ENCODE measurements at regions of chr5 and their contacts with region 1.

Region 1: GRCh38 chr5:58498340-58498942 is 7.2 kb downstream of the GAPT start:
- DNase-seq: peak; percentile 48
- H3K4me3 ChIP-seq: no peak overlapping the region
- H3K27ac ChIP-seq: no peak overlapping the region
- H3K4me1 ChIP-seq: no peaks in the 10 kb centered on the region
- H3K27me3 ChIP-seq: no peaks in the 10 kb centered on the region
- CTCF ChIP-seq: peak; percentile 81

Region 2: GRCh38 chr5:57778501-57779091 is 719.8 kb before region 1 on chr5:
- CTCF ChIA-PET with region 1: no interaction called
- POLR2A ChIA-PET with region 1: no interaction called
- intact Hi-C with region 1: no loop called
- DNase-seq: no peak
- H3K4me3 ChIP-seq: no peak overlapping the region
- H3K27ac ChIP-seq: no peak overlapping the region
- H3K4me1 ChIP-seq: no peaks in the 10 kb centered on the region
- H3K27me3 ChIP-seq: no peaks in the 10 kb centered on the region
- CTCF ChIP-seq: no peak

Region 3: DNA sequence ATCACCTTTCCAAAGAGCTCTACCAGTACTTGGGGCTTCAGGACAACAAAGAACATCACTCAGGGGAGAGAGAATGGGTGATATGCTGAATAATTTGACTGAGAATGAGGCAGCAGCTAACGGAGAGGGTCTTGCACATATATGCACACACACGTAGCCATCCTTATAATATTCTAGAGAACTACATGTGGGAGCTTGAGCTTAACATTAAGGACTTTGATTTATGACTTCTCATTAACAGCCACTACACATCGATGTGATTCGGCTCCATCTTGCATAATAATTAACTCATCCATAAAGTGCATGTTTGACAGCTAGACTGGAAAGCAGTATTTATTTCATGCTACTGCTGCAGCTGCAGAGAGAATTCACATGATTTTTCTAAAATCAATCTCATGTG is 247.9 kb after region 1 on chr5:
- CTCF ChIA-PET with region 1: no interaction called
- POLR2A ChIA-PET with region 1: no interaction called
- intact Hi-C with region 1: loop called (anchors 10 kb)
- DNase-seq: no peak
- H3K4me3 ChIP-seq: no peak overlapping the region
- H3K27ac ChIP-seq: no peak overlapping the region
- H3K4me1 ChIP-seq: peaks cover 5% of the 10 kb centered on the region
- H3K27me3 ChIP-seq: no peaks in the 10 kb centered on the region
- CTCF ChIP-seq: no peak

Region 4: GRCh38 chr5:58810086-58810485 is 311.6 kb after region 1 on chr5:
- CTCF ChIA-PET with region 1: no interaction called
- POLR2A ChIA-PET with region 1: no interaction called
- intact Hi-C with region 1: loop called (anchors 5 kb)
- DNase-seq: no peak
- H3K4me3 ChIP-seq: no peak overlapping the region
- H3K27ac ChIP-seq: no peak overlapping the region
- H3K4me1 ChIP-seq: no peaks in the 10 kb centered on the region
- H3K27me3 ChIP-seq: no peaks in the 10 kb centered on the region
- CTCF ChIP-seq: no peak

Measured in A673 (cell line).